Activated B cell treated with CpG ODN at 0.5 μM for 24 hours (primary cell): ENCODE measurements at regions of chr20 and their contacts with region 1.

Region 1: DNA sequence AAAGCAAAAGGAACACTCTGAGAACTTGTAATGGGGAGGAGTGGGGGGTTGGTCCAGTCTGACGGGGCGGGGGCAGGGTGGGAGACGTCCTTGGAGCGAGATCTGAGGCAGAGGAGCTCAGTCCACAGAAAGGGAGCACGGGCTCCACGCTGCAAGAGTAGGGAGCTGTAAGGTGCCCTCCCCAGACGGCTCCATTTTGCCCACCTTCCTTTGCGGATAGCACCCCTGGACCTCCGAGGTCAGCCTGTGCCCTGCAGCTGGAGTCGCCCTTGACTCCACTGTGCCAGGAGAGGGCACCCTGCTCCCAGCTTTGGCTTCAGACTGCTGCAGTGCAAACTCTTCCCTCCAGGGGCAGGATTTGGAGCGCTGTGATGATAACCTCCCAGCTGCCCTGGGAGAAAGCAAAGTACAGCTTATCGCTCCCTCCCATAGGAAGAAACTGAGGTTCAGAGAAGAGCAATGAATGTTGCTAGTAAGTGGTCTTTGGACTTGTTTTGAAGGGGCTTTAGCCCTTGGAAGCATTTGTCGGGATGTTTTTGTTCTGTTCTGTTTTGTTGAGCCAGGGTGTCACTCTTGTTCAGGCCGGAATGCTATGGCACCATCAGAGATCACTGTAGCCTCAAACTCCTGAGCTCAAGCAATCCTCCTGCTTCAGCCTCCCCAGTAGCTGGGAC is 9.5 kb upstream of the AHCY start:
- DNase-seq: peak; percentile 74
- ATAC-seq: peak; percentile 100
- H3K4me3 Mint-ChIP-seq: no peak overlapping the region
- H3K27ac Mint-ChIP-seq: no peak overlapping the region
- H3K4me1 Mint-ChIP-seq: peaks cover 7% of the 10 kb centered on the region
- H3K27me3 Mint-ChIP-seq: peaks cover 19% of the 10 kb centered on the region
- CTCF ChIP-seq: peak; percentile 90

Region 2: DNA sequence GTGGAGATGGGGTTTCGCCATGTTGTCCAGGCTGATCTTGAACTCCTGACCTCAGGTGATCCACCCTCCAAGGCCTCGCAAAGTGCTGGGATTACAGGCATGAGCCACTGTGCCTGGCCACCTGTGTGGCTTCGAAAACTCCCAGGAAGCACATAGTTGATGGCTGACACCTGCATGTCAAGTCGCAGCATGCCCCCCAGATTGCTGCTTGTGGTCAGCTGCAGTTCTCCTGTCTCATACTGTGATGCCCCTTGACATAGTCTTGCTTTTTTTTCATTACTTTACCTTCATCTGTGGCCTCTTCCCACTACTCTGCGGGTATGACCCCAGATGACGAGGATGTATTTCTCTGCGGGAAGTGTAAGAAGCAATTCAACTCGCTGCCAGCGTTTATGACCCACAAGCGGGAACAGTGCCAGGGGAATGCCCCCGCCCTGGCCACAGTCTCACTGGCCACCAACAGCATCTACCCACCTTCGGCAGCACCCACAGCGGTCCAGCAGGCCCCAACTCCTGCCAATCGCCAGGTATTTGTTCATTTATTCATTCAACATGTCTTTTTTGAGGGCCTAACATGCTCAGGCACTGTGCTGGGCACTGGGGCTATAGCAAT is 567.8 kb before region 1 on chr20:
- CTCF ChIA-PET with region 1: no interaction called
- POLR2A ChIA-PET with region 1: no interaction called
- intact Hi-C with region 1: no loop called
- DNase-seq: no peak
- ATAC-seq: no peak
- H3K4me3 Mint-ChIP-seq: no peak overlapping the region
- H3K27ac Mint-ChIP-seq: no peak overlapping the region
- H3K4me1 Mint-ChIP-seq: peaks cover 4% of the 10 kb centered on the region
- H3K27me3 Mint-ChIP-seq: no peaks in the 10 kb centered on the region
- CTCF ChIP-seq: no peak

Region 3: GRCh38 chr20:34403908-34404307 is 91.2 kb after region 1 on chr20:
- CTCF ChIA-PET with region 1: interaction called, 8 read pairs
- POLR2A ChIA-PET with region 1: interaction called, 11 read pairs
- intact Hi-C with region 1: no loop called
- DNase-seq: no peak
- ATAC-seq: peak; percentile 60
- H3K4me3 Mint-ChIP-seq: peak overlapping the region; percentile 24
- H3K27ac Mint-ChIP-seq: peak overlapping the region; percentile 68
- H3K4me1 Mint-ChIP-seq: peaks cover 53% of the 10 kb centered on the region
- H3K27me3 Mint-ChIP-seq: no peaks in the 10 kb centered on the region
- CTCF ChIP-seq: no peak

Region 4: GRCh38 chr20:34473262-34473883 is 160.7 kb after region 1 on chr20:
- CTCF ChIA-PET with region 1: interaction called, 30 read pairs
- POLR2A ChIA-PET with region 1: no interaction called
- intact Hi-C with region 1: loop called (anchors 1 kb)
- DNase-seq: no peak
- ATAC-seq: no peak
- H3K4me3 Mint-ChIP-seq: no peak overlapping the region
- H3K27ac Mint-ChIP-seq: no peak overlapping the region
- H3K4me1 Mint-ChIP-seq: peaks cover 10% of the 10 kb centered on the region
- H3K27me3 Mint-ChIP-seq: no peaks in the 10 kb centered on the region
- CTCF ChIP-seq: no peak

Region 5: GRCh38 chr20:34522969-34523871 is 210.5 kb after region 1 on chr20:
- CTCF ChIA-PET with region 1: interaction called, 31 read pairs
- POLR2A ChIA-PET with region 1: interaction called, 7 read pairs
- intact Hi-C with region 1: loop called (anchors 1 kb)
- DNase-seq: no peak
- ATAC-seq: peak; percentile 67
- H3K4me3 Mint-ChIP-seq: no peak overlapping the region
- H3K27ac Mint-ChIP-seq: no peak overlapping the region
- H3K4me1 Mint-ChIP-seq: peaks cover 36% of the 10 kb centered on the region
- H3K27me3 Mint-ChIP-seq: no peaks in the 10 kb centered on the region
- CTCF ChIP-seq: no peak

Region 6: GRCh38 chr20:34768096-34768495 is 455.4 kb after region 1 on chr20:
- CTCF ChIA-PET with region 1: interaction called, 95 read pairs
- POLR2A ChIA-PET with region 1: interaction called, 4 read pairs
- intact Hi-C with region 1: loop called (anchors 1 kb)
- DNase-seq: no peak
- ATAC-seq: no peak
- H3K4me3 Mint-ChIP-seq: no peak overlapping the region
- H3K27ac Mint-ChIP-seq: no peak overlapping the region
- H3K4me1 Mint-ChIP-seq: no peaks in the 10 kb centered on the region
- H3K27me3 Mint-ChIP-seq: no peaks in the 10 kb centered on the region
- CTCF ChIP-seq: no peak